Psoas muscle (tissue), 8 donors: ENCODE measurements at regions of chr3 and their contacts with region 1.

Region 1: DNA sequence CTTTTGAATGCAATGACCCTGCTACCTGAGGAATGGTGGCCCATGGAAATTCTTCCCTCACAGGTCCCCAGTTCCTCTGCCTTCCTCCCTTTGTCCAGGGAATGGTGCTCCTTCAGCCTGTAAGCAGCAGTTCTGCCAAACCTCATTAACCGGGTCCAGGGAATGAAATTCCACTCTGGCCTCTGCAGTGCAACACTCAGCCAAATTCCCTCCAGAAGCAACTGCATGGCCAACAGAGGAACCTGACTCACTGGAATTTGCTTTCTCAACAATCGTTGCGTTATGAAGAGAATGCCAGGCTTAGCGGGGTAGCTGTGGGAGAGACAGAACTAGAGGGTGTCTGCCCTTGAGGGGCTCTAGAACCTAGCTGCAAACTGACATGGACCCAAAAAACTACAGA is 449.4 kb upstream of the PROK2 start:
- DNase-seq: peak; percentile 34 to 71
- ATAC-seq: peak; percentile 92 to 96 (median 94)
- H3K4me3 ChIP-seq: no peak overlapping the region
- H3K27ac ChIP-seq: no peak overlapping the region
- H3K4me1 ChIP-seq: peaks cover 16% of the 10 kb centered on the region
- H3K27me3 ChIP-seq: no peaks in the 10 kb centered on the region
- CTCF ChIP-seq: no peak

Region 2: DNA sequence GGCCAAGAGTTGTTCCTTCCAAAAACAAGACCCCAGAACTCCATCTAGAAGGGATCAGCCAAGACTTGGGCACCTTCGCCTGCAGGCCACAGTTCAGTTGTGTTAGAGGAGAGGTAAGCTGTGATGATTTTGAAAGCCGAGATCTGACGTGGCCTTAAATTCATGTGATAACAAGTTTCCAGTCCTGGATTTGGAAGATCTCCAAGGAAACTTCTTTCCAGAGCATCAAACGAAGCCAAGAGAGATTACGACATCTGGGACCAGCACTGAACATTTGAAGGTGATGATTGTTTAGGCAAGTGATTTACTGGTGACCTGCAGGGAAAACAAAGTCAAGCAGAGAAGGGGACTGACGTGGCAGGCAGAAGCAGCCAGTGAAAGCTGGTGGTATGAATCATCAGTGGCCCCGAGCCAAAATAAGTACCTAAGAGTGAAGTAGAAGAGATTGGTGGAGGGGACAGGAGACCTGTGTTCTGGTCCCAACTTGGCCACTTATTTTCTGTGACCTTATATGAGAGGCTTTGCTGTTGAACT is 110.4 kb before region 1 on chr3:
- intact Hi-C with region 1: loop called in 1 of 2 experiments (anchors 10 kb)
- DNase-seq: peak; percentile 66 to 85
- ATAC-seq: peak; percentile 97 to 98 (median 97)
- H3K4me3 ChIP-seq: no peak overlapping the region
- H3K27ac ChIP-seq: peak overlapping the region; percentile 60
- H3K4me1 ChIP-seq: peaks cover 15% of the 10 kb centered on the region
- H3K27me3 ChIP-seq: no peaks in the 10 kb centered on the region
- CTCF ChIP-seq: no peak